Psoas muscle (tissue), 8 donors: ENCODE measurements at regions of chr14 and their contacts with region 1.

Region 1: GRCh38 chr14:63852817-63853731 is at the start of gene SYNE2:
- DNase-seq: peak; percentile 77 to 87
- ATAC-seq: peak; percentile 92 to 96 (median 94)
- H3K4me3 ChIP-seq: peak within 1 kb of the TSS; percentile 88
- H3K27ac ChIP-seq: peak within 1 kb of the TSS; percentile 94
- H3K4me1 ChIP-seq: peaks cover 22% of the 10 kb centered on the region
- H3K27me3 ChIP-seq: no peaks in the 10 kb centered on the region
- CTCF ChIP-seq: peak; percentile 37
- total RNA-seq, gene SYNE2: 78.3 to 239 (median 152) TPM

Region 2: DNA sequence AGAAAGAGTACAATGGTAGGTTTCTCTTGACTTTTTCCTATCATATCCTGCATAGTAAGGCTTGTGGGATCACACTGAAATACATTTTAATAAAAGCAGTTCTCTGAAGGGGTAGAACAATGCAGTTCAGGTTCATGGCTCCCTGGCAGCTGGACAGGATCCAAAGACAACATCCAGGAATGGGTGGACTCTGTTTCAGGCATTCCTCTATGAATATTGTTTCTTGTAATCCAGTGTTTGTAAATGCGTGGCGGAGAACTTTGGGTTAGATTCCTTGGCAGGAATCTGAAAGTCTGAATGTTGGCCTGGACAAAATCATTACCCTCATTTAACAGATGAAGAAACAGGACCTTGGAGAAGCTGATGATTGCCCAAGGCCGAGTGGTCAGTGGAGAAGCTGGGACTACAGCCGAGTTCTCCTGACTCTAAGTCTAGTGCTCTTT is 43.2 kb after region 1 on chr14:
- intact Hi-C with region 1: loop called in 1 of 2 experiments (anchors 5 kb)
- DNase-seq: peak in 1 of 2 donors; percentile 37
- ATAC-seq: peak in 3 of 4 donors; percentile 32 to 49 (median 34)
- H3K4me3 ChIP-seq: no peak overlapping the region
- H3K27ac ChIP-seq: peak overlapping the region; percentile 11
- H3K4me1 ChIP-seq: peaks cover 50% of the 10 kb centered on the region
- H3K27me3 ChIP-seq: no peaks in the 10 kb centered on the region
- CTCF ChIP-seq: no peak

Region 3: DNA sequence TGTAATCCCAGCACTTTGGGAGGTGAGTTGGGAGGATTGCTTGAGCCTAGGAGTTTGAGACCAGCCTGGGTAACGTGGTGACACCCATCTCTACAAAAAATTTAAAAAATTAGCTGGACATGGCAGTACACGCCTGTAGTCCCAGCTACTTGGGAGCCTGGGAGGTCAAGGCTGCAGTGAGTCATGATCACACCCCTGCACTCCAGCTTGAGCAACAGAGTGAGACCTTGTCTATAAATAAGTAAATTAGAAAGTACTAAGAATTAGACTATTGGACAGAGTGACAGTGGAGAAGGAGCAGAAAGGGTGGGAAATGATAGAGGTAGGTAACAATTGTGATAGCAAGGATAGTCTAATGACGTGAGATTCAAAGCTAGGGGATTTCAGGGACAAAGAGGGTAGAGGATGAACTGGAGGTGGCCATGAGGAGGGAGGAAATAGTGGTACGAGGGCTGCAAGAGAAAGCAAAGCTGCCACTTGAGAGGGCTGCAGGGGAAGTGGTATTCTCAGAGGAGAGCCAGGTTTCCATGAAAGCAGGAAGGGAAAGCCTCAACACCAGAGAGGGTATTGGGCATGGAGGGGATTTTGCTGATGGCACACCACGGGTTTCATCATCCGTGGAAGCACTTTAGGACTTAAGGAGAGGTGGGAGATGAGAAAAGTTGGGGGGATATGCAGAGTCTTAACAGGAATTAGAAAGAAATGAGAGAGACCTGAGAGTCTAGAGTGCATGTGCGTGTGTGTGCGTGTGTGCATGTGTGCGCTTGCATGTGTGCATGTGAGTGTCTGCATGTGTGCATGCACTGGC is 85.3 kb after region 1 on chr14:
- intact Hi-C with region 1: loop called in 1 of 2 experiments (anchors 5 kb)
- DNase-seq: no peak
- ATAC-seq: peak; percentile 51 to 65 (median 64)
- H3K4me3 ChIP-seq: no peak overlapping the region
- H3K27ac ChIP-seq: peak overlapping the region; percentile 27
- H3K4me1 ChIP-seq: peaks cover 6% of the 10 kb centered on the region
- H3K27me3 ChIP-seq: no peaks in the 10 kb centered on the region
- CTCF ChIP-seq: no peak

Region 4: GRCh38 chr14:63952933-63953437 is 99.9 kb after region 1 on chr14:
- intact Hi-C with region 1: loop called in 1 of 2 experiments (anchors 5 kb)
- DNase-seq: no peak
- ATAC-seq: no peak
- H3K4me3 ChIP-seq: no peak overlapping the region
- H3K27ac ChIP-seq: no peak overlapping the region
- H3K4me1 ChIP-seq: no peaks in the 10 kb centered on the region
- H3K27me3 ChIP-seq: no peaks in the 10 kb centered on the region
- CTCF ChIP-seq: no peak